Activated CD8-positive, alpha-beta T cell treated with anti-CD3 and anti-CD28 coated beads for 36 hours (primary cell): ENCODE measurements at regions of chr17 and their contacts with region 1.

Region 1: DNA sequence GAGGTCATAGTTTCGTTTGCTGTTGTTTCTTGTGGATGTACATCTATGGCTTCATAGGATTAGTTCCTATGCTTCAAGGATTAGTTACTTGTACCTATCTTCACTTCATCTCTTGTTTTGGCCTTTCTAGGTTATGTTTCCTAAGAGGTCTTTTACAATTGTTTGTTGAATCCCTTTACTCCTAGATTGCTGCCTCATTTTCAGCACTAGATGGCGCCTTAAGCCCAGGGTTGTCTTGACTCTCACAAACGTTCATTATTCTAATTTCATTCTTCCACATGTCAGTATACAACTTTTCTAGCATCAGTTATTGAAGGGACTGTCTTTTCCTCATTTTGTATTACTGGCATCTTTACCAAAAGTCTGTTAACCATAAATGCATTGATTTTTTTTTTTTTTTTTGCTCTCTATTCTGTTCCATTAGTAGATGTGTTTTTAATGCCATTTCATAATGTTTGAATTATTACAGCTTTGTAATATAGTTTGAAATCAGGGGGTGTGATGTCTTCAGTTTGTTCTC is 45.0 kb upstream of the NACA2 start:
- DNase-seq: peak; percentile 76
- ATAC-seq: no peak
- H3K4me3 Mint-ChIP-seq: no peak overlapping the region
- H3K27ac Mint-ChIP-seq: no peak overlapping the region
- H3K4me1 Mint-ChIP-seq: no peaks in the 10 kb centered on the region
- H3K27me3 Mint-ChIP-seq: peaks cover 41% of the 10 kb centered on the region
- CTCF ChIP-seq: peak; percentile 77

Region 2: DNA sequence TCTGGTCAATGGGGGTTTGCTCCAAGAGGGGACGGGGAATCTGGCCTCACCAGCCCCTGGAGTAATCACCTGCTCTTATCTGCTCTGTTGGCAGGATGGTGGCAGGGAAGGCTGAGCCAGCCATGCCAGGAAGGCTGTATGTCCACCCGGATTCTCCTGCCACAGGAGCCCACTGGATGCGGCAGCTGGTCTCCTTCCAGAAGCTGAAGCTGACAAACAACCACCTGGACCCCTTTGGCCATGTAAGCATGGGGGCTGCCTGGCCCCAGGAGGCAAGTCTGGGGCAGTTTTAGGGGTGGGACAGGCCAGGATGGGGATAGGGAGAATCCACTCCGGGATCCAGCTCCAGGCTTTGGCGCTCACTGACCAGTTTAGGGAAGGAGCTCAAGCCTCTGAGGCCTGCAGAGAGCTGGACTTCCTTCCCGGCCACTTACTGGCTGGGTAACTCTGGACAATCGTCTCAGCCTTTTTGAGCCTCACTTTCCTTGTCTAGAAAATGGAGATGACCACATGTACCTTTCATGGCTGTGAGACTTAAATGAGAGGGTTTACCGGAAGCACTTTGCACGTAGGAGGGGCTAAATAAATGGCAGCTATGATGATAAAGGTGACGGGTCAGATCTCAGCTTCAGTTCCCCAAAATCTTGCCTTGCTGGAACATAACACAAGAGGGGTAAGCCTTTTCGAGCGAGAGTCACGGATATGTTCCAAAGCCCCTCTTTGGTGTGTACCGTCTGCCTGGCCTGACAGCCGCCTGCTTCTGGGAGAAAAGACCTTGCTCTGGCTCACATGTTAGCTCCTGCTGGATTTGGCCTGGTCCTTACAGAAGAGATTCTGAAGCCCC is 168.3 kb before region 1 on chr17:
- CTCF ChIA-PET with region 1: no interaction called
- POLR2A ChIA-PET with region 1: no interaction called
- intact Hi-C with region 1: no loop called
- DNase-seq: no peak
- ATAC-seq: no peak
- H3K4me3 Mint-ChIP-seq: no peak overlapping the region
- H3K27ac Mint-ChIP-seq: no peak overlapping the region
- H3K4me1 Mint-ChIP-seq: peaks cover 1% of the 10 kb centered on the region
- H3K27me3 Mint-ChIP-seq: peaks cover 18% of the 10 kb centered on the region
- CTCF ChIP-seq: no peak

Region 3: GRCh38 chr17:61647047-61647446 is 11.1 kb after region 1 on chr17:
- CTCF ChIA-PET with region 1: interaction called, 18 read pairs
- POLR2A ChIA-PET with region 1: no interaction called
- intact Hi-C with region 1: no loop called
- DNase-seq: no peak
- ATAC-seq: no peak
- H3K4me3 Mint-ChIP-seq: no peak overlapping the region
- H3K27ac Mint-ChIP-seq: no peak overlapping the region
- H3K4me1 Mint-ChIP-seq: no peaks in the 10 kb centered on the region
- H3K27me3 Mint-ChIP-seq: peaks cover 21% of the 10 kb centered on the region
- CTCF ChIP-seq: no peak

Region 4: GRCh38 chr17:61837175-61838051 is 201.4 kb after region 1 on chr17:
- CTCF ChIA-PET with region 1: interaction called, 9 read pairs
- POLR2A ChIA-PET with region 1: no interaction called
- intact Hi-C with region 1: loop called (anchors 5 kb)
- DNase-seq: peak; percentile 71
- ATAC-seq: no peak
- H3K4me3 Mint-ChIP-seq: no peak overlapping the region
- H3K27ac Mint-ChIP-seq: no peak overlapping the region
- H3K4me1 Mint-ChIP-seq: no peaks in the 10 kb centered on the region
- H3K27me3 Mint-ChIP-seq: no peaks in the 10 kb centered on the region
- CTCF ChIP-seq: peak; percentile 77